Ovary (tissue), 10 donors: ENCODE measurements at regions of chr19 and their contacts with region 1.

Region 1: GRCh38 chr19:51179256-51179655 is 37.2 kb downstream of the SIGLEC7 start:
- DNase-seq: no peak
- H3K4me3 ChIP-seq: no peak overlapping the region
- H3K27ac ChIP-seq: no peak overlapping the region
- H3K4me1 ChIP-seq: no peaks in the 10 kb centered on the region
- H3K27me3 ChIP-seq: no peaks in the 10 kb centered on the region
- CTCF ChIP-seq: no peak
- EP300 ChIP-seq: no peak
- POLR2A ChIP-seq: no peak

Region 2: DNA sequence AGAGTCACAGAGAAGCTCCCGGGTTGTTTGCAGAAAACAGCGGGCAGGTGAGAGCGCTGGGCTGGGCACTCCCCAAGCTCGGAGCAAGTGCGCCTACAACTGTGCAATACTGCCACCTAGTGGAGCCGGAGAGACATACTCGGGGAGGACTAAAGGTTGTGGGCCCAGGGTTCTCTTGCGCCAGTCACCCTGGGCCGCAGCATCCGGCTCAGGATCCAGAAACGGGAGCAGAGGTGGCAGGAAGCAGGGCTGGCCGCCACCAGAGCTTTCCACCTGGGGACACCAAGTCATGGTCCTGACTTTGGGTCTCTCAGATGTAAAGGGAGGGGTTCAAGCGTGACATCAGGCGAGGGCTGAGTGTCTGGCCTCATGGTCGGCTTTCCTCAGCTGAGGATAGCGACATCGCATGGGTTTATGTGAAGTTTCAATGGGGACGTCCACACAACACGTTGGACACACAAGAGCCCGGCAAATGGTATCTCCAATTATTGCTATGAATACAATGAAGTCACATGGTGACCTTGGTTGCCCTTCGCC is 256.9 kb before region 1 on chr19:
- intact Hi-C with region 1: loop called in 1 of 4 experiments (anchors 10 kb)
- DNase-seq: peak; percentile 39 to 64 (median 52)
- H3K4me3 ChIP-seq: no peak overlapping the region
- H3K27ac ChIP-seq: no peak overlapping the region
- H3K4me1 ChIP-seq: no peaks in the 10 kb centered on the region
- H3K27me3 ChIP-seq: no peaks in the 10 kb centered on the region
- CTCF ChIP-seq: peak in 2 of 3 donors; percentile 30 to 46
- EP300 ChIP-seq: no peak
- POLR2A ChIP-seq: no peak

Region 3: DNA sequence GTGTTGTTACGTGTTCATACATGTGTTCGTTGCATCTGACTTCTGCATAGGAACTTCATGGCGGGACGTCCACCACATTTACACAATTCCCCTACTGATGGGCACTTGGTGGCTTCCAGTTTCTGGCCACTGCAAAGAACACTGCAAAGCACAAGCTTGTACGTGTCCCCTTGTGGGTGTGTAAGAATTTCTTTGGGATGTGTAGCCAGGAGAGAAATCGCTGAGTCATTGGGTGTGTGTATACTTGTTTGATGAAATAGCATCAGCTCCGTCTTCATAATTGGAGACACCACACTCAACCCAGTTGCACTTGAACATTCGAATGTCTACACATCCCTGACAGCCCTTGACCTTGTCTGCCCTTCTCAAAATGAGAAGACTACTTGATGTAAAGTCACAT is 245.6 kb before region 1 on chr19:
- intact Hi-C with region 1: loop called in 2 of 4 experiments (anchors 10 kb)
- DNase-seq: no peak
- H3K4me3 ChIP-seq: no peak overlapping the region
- H3K27ac ChIP-seq: no peak overlapping the region
- H3K4me1 ChIP-seq: no peaks in the 10 kb centered on the region
- H3K27me3 ChIP-seq: no peaks in the 10 kb centered on the region
- CTCF ChIP-seq: no peak
- EP300 ChIP-seq: no peak
- POLR2A ChIP-seq: no peak

Region 4: DNA sequence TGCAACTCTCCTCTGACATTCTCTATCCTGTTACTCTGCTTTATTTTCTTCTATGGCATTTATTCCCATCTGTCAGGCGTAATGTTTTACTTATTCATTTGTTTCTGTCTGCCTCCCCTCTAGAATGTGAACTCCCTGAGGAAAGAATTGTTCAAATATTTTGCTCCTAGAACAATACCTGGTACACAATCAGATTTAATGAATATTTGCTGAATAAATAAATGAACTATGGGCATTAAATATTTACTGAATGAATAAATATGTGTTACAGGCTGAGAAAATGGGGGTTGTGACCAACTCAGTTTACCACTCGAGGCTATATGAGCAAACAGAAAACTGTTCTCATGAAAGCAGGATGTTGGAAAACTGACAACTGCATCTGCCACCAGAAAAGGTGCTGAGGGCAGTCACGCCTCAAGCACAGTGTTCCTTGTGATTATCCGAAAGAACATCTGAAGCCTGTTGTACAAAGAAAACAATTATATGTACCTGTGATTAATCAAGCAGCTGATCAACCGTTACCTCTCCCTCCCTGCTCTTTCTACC is 108.3 kb before region 1 on chr19:
- intact Hi-C with region 1: no loop called
- DNase-seq: no peak
- H3K4me3 ChIP-seq: no peak overlapping the region
- H3K27ac ChIP-seq: no peak overlapping the region
- H3K4me1 ChIP-seq: no peaks in the 10 kb centered on the region
- H3K27me3 ChIP-seq: no peaks in the 10 kb centered on the region
- CTCF ChIP-seq: no peak
- EP300 ChIP-seq: no peak
- POLR2A ChIP-seq: no peak

Region 5: DNA sequence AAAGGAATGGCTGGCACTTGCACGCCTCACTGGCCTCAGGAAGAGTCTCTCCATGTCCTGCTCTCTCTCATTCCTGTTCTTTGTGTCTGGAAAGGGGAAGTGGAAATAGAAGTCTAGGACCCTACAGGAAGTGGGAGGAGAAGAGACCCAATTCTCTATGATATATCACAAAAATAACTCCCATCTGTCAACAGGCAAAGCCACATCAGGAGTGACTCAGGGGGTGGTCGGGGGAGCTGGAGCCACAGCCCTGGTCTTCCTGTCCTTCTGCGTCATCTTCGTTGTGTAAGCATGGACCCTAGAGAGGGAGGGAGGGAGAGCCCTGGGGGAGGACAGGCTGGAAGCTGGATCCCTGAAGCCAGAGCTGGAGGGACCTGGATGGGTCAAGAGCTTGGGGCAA is 51.5 kb before region 1 on chr19:
- intact Hi-C with region 1: no loop called
- DNase-seq: no peak
- H3K4me3 ChIP-seq: no peak overlapping the region
- H3K27ac ChIP-seq: no peak overlapping the region
- H3K4me1 ChIP-seq: peaks cover 26% of the 10 kb centered on the region
- H3K27me3 ChIP-seq: no peaks in the 10 kb centered on the region
- CTCF ChIP-seq: no peak
- EP300 ChIP-seq: no peak
- POLR2A ChIP-seq: no peak